ENCODE measurements at regions of chr11 and their contacts with region 1.

Region 1: GRCh38 chr11:4072668-4073285 is 21.8 kb upstream of the RRM1 start:
- DNase-seq: peak; percentile 69 to 82 (median 74)
- ATAC-seq: peak; percentile 97
- H3K4me3 ChIP-seq: no peak overlapping the region
- H3K27ac ChIP-seq: no peak overlapping the region
- H3K4me1 ChIP-seq: no peaks in the 10 kb centered on the region
- H3K27me3 ChIP-seq: no peaks in the 10 kb centered on the region
- CTCF ChIP-seq: peak; percentile 78 to 89 (median 78)
- EP300 ChIP-seq: no peak
- POLR2A ChIP-seq: no peak
- RAD21 ChIP-seq: peak; percentile 94 to 97

Region 2: GRCh38 chr11:3824714-3825472 is 247.9 kb before region 1 on chr11:
- CTCF ChIA-PET with region 1: interaction called, 11 read pairs
- POLR2A ChIA-PET with region 1: interaction called, 5 read pairs
- in situ Hi-C with region 1: no loop called
- intact Hi-C with region 1: loop called (anchors 1 kb)
- DNase-seq: peak; percentile 88 to 96 (median 90)
- ATAC-seq: peak; percentile 95
- H3K4me3 ChIP-seq: no peak overlapping the region
- H3K27ac ChIP-seq: peak overlapping the region; percentile 60
- H3K4me1 ChIP-seq: peaks cover 23 to 30% of the 10 kb centered on the region in 2 experiments
- H3K27me3 ChIP-seq: no peaks in the 10 kb centered on the region
- CTCF ChIP-seq: peak; percentile 99
- EP300 ChIP-seq: no peak
- POLR2A ChIP-seq: no peak
- RAD21 ChIP-seq: peak; percentile 91 to 94

Region 3: DNA sequence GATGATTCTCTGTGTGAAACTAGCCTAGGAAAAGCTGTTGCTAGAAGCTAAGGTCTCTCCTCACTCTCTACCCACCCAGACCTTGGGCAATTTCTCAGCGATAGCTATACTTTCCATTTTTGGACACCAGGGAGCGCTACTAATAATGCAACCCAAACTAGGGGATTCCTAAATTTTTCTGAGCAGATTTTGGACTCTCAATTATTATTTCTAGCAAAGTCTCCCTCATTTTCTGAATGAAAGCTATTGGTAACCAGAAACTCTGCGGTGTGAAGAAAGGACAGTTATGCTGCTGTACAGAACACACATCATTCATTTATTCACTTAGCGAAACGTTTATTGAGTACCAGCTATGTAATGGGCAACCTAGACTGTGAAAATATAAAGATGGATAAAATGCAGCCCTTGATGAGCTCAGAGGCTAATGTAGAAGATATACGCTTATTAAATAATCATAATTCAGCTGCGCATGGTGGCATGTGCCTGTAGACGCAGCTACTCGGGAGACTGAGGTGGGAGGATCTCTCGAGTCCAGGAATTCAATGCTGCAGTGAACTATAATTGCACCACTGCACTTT is 223.4 kb before region 1 on chr11:
- CTCF ChIA-PET with region 1: interaction called, 30 read pairs
- POLR2A ChIA-PET with region 1: interaction called, 13 read pairs
- in situ Hi-C with region 1: loop called (anchors 5 kb)
- intact Hi-C with region 1: loop called (anchors 1 kb)
- DNase-seq: peak in 3 of 4 experiments; percentile 42 to 76 (median 57)
- ATAC-seq: peak; percentile 80
- H3K4me3 ChIP-seq: no peak overlapping the region
- H3K27ac ChIP-seq: no peak overlapping the region
- H3K4me1 ChIP-seq: peaks cover 17 to 27% of the 10 kb centered on the region in 2 experiments
- H3K27me3 ChIP-seq: no peaks in the 10 kb centered on the region
- CTCF ChIP-seq: peak; percentile 72 to 82 (median 78)
- EP300 ChIP-seq: no peak
- POLR2A ChIP-seq: no peak
- RAD21 ChIP-seq: peak; percentile 81 to 83

Region 4: DNA sequence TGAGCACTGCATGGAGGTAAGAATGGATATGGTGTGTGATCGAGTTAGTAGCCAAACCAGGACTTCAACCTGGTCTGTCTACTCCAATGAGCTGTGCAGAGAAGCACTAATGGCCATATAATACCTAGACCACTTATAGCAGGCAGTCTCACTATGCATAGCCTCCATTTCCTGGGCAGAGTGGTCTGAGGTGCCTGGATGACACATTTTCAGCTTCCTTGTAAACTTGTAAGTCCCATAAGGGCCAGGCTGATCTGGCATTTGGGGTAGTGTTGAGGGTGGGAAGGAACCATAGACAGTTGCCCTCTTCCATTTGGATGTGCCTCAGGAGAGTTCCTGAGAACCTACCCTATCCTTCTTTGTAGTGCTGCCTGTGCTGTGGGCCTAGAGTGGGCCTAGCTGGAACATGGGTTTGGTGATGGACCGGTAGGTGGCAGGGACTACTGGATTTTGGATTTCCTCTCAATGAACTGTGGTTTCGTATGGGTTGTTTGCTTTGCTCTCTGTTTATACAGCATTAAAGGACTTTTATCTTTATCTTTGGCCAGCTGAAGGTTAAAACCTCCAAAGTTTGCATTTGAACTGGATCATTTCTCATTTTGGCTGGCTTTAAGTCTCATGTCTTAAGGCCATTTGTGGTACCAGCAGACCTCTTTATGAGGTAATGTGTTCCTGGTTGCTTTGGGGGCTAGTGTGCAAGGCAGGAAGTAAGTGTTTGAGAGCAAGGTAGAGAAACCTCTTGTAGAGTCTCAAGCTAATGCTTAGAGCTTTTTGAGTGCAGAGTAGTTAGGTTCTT is 130.4 kb before region 1 on chr11:
- CTCF ChIA-PET with region 1: interaction called, 3 read pairs
- POLR2A ChIA-PET with region 1: no interaction called
- in situ Hi-C with region 1: no loop called
- intact Hi-C with region 1: loop called (anchors 1 kb)
- DNase-seq: peak in 1 of 4 experiments; percentile 35
- ATAC-seq: peak; percentile 79
- H3K4me3 ChIP-seq: no peak overlapping the region
- H3K27ac ChIP-seq: no peak overlapping the region
- H3K4me1 ChIP-seq: peaks cover 0 to 15% of the 10 kb centered on the region in 2 experiments; a peak in 3 of 5 replicates
- H3K27me3 ChIP-seq: no peaks in the 10 kb centered on the region
- CTCF ChIP-seq: peak in 2 of 3 experiments; percentile 38 to 52; a peak in 4 of 6 replicates
- EP300 ChIP-seq: no peak
- POLR2A ChIP-seq: no peak
- RAD21 ChIP-seq: peak; percentile 39 to 67; a peak in 3 of 4 replicates

Region 5: GRCh38 chr11:3984896-3985295 is 87.9 kb before region 1 on chr11:
- CTCF ChIA-PET with region 1: no interaction called
- POLR2A ChIA-PET with region 1: no interaction called
- in situ Hi-C with region 1: no loop called
- intact Hi-C with region 1: loop called (anchors 5 kb)
- DNase-seq: peak; percentile 29 to 75 (median 52)
- ATAC-seq: peak; percentile 84
- H3K4me3 ChIP-seq: no peak overlapping the region
- H3K27ac ChIP-seq: no peak overlapping the region
- H3K4me1 ChIP-seq: peaks cover 0 to 13% of the 10 kb centered on the region in 2 experiments; a peak in 3 of 5 replicates
- H3K27me3 ChIP-seq: no peaks in the 10 kb centered on the region
- CTCF ChIP-seq: peak; percentile 58 to 78 (median 63)
- EP300 ChIP-seq: no peak
- POLR2A ChIP-seq: no peak
- RAD21 ChIP-seq: peak; percentile 78 to 81

Region 6: GRCh38 chr11:4181782-4182721 is 109.3 kb after region 1 on chr11:
- CTCF ChIA-PET with region 1: no interaction called
- POLR2A ChIA-PET with region 1: no interaction called
- in situ Hi-C with region 1: no loop called
- intact Hi-C with region 1: no loop called
- DNase-seq: peak; percentile 69 to 82 (median 74)
- ATAC-seq: peak; percentile 92
- H3K4me3 ChIP-seq: no peak overlapping the region
- H3K27ac ChIP-seq: no peak overlapping the region
- H3K4me1 ChIP-seq: peaks cover 14 to 16% of the 10 kb centered on the region in 2 experiments; a peak in 4 of 5 replicates
- H3K27me3 ChIP-seq: no peaks in the 10 kb centered on the region
- CTCF ChIP-seq: peak; percentile 83 to 89 (median 85)
- EP300 ChIP-seq: no peak
- POLR2A ChIP-seq: no peak
- RAD21 ChIP-seq: peak; percentile 74 to 85

Region 7: DNA sequence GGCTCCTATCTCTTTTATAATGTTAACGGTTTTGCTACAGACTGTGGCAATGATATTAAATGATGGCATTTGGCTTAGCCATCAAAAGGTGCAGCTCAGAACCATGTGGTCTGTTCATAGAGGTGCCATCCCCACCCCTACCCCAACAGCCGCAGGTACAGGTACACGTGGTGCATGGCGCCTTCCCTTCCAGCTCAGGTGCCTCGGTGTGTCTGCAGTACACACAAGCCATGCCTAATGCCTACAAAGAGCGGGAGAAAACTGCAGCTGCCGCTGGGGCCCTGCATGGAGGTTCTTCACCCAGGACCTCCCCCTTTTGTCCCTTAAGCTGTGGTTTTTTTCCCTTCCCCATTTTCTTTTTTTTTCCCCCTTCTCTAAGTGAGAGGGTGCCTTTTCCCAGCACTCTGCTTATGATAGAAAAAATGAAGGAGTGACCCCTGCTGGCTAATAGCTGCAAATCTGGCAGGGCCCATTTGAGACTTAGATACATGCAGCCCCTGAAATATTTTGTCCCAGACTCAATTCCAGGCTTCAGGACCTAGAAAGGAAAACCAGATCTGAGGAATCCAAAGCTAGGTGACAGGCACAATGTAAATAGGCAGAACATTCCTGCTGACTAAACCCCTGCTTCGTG is 478.7 kb after region 1 on chr11:
- CTCF ChIA-PET with region 1: no interaction called
- POLR2A ChIA-PET with region 1: no interaction called
- in situ Hi-C with region 1: no loop called
- intact Hi-C with region 1: no loop called
- DNase-seq: peak; percentile 16 to 47 (median 30)
- ATAC-seq: peak; percentile 73
- H3K4me3 ChIP-seq: no peak overlapping the region
- H3K27ac ChIP-seq: no peak overlapping the region
- H3K4me1 ChIP-seq: peaks cover 0 to 3% of the 10 kb centered on the region in 2 experiments; a peak in 1 of 5 replicates
- H3K27me3 ChIP-seq: no peaks in the 10 kb centered on the region
- CTCF ChIP-seq: peak in 2 of 3 experiments; percentile 57; a peak in 4 of 6 replicates
- EP300 ChIP-seq: no peak
- POLR2A ChIP-seq: no peak
- RAD21 ChIP-seq: peak in 1 of 2 experiments; percentile 46; a peak in 2 of 4 replicates

Region 8: GRCh38 chr11:4727171-4727570 is 654.4 kb after region 1 on chr11:
- CTCF ChIA-PET with region 1: no interaction called
- POLR2A ChIA-PET with region 1: no interaction called
- in situ Hi-C with region 1: no loop called
- intact Hi-C with region 1: no loop called
- DNase-seq: no peak
- ATAC-seq: no peak
- H3K4me3 ChIP-seq: no peak overlapping the region
- H3K27ac ChIP-seq: no peak overlapping the region
- H3K4me1 ChIP-seq: 0 out of 5 replicates have a peak, but pooled peaks cover 0 to 3% of the 10 kb centered on the region in 2 experiments
- H3K27me3 ChIP-seq: peaks cover 0 to 18% of the 10 kb centered on the region in 2 experiments; a peak in 4 of 5 replicates
- CTCF ChIP-seq: no peak
- EP300 ChIP-seq: no peak
- POLR2A ChIP-seq: no peak
- RAD21 ChIP-seq: no peak